Right cardiac atrium (tissue), 5 donors: ENCODE measurements at regions of chr6 and their contacts with region 1.

Region 1: DNA sequence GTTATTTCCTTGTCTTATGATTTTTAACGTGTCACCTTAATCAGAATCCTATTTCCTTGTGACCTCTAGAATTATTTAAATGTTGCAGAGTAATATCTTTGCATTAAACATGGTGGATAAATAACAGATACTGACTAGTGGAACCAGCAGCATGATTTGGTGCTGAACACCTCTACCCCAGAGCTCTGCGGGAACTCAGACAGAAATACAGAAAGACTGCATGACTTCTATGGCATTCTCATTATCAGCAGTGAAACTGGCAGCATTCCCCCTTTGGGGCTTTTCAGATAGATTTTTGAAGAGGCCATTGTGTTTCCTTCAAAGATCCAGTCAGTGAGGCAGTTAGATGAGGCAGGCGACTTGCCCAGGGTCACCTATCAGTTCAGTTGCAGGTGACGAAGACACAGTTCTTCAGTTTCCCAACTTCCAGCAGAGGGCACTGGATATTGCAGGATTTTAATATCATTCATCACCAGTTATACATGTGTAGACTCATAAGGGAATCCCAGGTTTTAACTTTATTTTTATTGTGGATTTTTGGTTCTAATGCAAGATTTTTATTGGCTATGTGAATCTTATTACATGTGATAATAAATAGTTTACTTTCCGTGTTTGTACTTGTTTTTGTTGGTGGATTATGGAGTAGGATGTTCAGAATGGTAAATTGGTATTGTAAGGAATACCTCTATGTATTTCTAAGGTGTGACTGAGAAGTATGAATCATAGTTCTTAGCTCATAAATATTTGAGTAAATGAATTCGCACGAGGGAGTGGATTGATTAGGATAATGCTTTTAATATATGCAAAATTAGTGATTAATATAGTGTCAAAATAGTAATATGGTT is 81.3 kb downstream of the AFDN start:
- DNase-seq: peak in 1 of 3 donors; percentile 32
- ATAC-seq: peak in 1 of 2 donors; percentile 64
- H3K4me3 ChIP-seq: no peak overlapping the region
- H3K27ac ChIP-seq: no peak overlapping the region
- H3K4me1 ChIP-seq: no peaks in the 10 kb centered on the region
- H3K27me3 ChIP-seq: no peaks in the 10 kb centered on the region

Region 2: GRCh38 chr6:167462514-167463312 is 445.3 kb before region 1 on chr6:
- intact Hi-C with region 1: no loop called
- DNase-seq: no peak
- ATAC-seq: no peak
- H3K4me3 ChIP-seq: no peak overlapping the region
- H3K27ac ChIP-seq: no peak overlapping the region
- H3K4me1 ChIP-seq: no peaks in the 10 kb centered on the region
- H3K27me3 ChIP-seq: no peaks in the 10 kb centered on the region

Region 3: DNA sequence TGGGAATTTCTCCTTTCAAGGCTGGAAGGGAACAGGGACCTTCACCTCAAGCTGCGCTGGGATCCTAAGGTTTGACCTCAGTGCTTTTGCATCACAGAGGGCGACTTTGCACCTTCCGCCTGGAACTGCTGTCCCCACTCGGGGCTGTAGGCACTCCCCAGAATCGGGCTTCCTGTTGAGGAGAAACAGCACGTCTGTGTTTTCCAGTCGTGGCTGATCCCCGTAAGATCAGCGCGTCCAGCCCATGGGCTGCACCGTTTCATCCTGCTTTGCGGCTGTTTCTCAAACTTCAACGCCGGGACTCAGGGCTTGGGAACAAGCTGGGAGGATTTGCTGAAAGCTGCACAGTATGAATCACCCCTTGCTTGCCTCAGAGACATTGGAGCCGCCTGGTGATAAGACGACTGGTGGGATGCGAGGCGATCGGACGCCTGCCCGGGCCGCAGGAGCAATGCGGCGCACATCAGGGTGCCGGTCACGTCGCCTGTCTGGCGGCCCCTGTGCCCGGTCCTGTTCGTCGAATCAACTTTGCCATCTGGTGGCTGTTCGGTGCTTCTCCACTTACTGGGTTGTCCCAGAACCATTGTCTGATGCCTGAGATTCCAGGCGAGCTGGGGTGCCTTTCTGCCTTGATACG is 224.6 kb after region 1 on chr6:
- intact Hi-C with region 1: loop called in 2 of 4 experiments (anchors 5 to 10 kb)
- DNase-seq: peak; percentile 73 to 89 (median 88)
- ATAC-seq: peak; percentile 83 to 85
- H3K4me3 ChIP-seq: no peak overlapping the region
- H3K27ac ChIP-seq: no peak overlapping the region
- H3K4me1 ChIP-seq: peaks cover 3% of the 10 kb centered on the region
- H3K27me3 ChIP-seq: no peaks in the 10 kb centered on the region

Region 4: GRCh38 chr6:168377484-168377855 is 469.4 kb after region 1 on chr6:
- intact Hi-C with region 1: no loop called
- DNase-seq: peak; percentile 40 to 78 (median 75)
- ATAC-seq: peak; percentile 80
- H3K4me3 ChIP-seq: no peak overlapping the region
- H3K27ac ChIP-seq: no peak overlapping the region
- H3K4me1 ChIP-seq: peaks cover 4% of the 10 kb centered on the region
- H3K27me3 ChIP-seq: no peaks in the 10 kb centered on the region